ENCODE measurements at regions of chr19 and their contacts with region 1.

Region 1: DNA sequence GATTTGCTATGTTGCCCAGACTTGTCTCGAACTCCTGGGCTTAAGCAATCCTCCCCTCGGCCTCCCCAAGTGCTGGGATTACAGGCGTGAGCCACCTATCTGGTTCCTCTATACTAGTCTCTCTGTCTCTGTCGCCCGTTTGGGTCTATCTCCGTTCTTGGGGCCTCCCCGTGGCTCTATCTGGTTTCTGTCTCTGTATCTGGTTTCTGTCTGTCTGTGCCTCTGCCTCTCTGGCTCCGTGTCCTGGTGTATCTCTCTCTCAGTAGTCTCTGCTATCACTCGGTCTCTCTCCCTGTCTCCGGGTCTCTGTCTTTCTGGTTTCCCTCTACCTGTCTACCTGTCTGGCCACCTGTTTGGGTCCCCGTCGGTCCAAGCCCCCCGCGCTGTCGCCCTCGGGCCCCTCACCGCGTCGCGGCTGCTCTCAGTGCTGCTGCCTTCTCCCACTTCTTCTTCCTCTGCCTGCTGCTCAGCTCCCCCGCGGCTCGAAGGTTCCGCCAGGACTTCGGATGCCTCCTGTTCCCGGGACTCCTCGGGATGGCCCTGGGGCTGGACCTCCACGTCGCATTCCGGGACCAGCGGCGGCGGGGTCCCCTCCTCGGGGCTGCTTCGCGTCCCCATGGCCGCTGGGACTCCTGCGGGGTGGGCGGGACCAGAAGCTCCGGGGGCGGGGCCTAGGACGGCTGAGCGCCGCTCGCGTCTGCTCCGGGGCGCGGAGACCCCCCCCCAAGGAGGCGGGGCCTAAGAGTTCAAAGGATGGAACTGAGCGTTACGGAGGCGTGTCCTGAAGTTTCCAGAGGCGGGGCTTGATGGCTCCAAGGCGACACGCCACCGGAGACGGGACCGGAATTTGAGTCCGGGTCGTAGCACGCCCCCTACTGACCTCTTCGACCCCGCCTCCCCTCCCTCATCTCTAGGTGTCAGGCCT is 783 bp downstream of the PHLDB3 start:
- DNase-seq: peak; percentile 95 to 98
- H3K4me3 ChIP-seq: peak overlapping the region; percentile 40 to 59 (median 56)
- H3K27ac ChIP-seq: peak overlapping the region; percentile 30 to 78 (median 45)
- H3K4me1 ChIP-seq: peaks cover 6 to 16% of the 10 kb centered on the region in 2 donors
- H3K27me3 ChIP-seq: no peaks in the 10 kb centered on the region
- CTCF ChIP-seq: peak in 1 of 6 experiments; percentile 2
- POLR2A ChIP-seq: peak in 1 of 2 donors; percentile 49

Region 2: GRCh38 chr19:43463381-43464136 is 40.2 kb before region 1 on chr19:
- intact Hi-C with region 1: loop called (anchors 5 kb)
- DNase-seq: peak; percentile 93 to 97
- H3K4me3 ChIP-seq: peak overlapping the region in 2 of 3 donors; percentile 12 to 38
- H3K27ac ChIP-seq: peak overlapping the region; percentile 4 to 62 (median 49)
- H3K4me1 ChIP-seq: peaks cover 0 to 5% of the 10 kb centered on the region in 2 donors
- H3K27me3 ChIP-seq: no peaks in the 10 kb centered on the region
- CTCF ChIP-seq: peak in 1 of 6 experiments; percentile 10
- POLR2A ChIP-seq: peak in 1 of 2 donors; percentile 38

Measured in thyroid gland (tissue), 4 donors.